SK-N-SH (cell line): ENCODE measurements at regions of chr7 and their contacts with region 1.

Region 1: GRCh38 chr7:5083311-5083711 is 37.7 kb downstream of the RBAK start:
- DNase-seq: peak; percentile 63
- H3K4me3 ChIP-seq: peak overlapping the region; percentile 9 to 35; a peak in 2 of 4 replicates
- H3K27ac ChIP-seq: no peak overlapping the region
- H3K4me1 ChIP-seq: peaks cover 0 to 10% of the 10 kb centered on the region in 2 experiments; a peak in 1 of 4 replicates
- H3K27me3 ChIP-seq: peaks cover 36% of the 10 kb centered on the region
- CTCF ChIP-seq: no peak
- EP300 ChIP-seq: no peak
- RAD21 ChIP-seq: peak; percentile 2; the same call in 1 of the 2 replicates

Region 2: DNA sequence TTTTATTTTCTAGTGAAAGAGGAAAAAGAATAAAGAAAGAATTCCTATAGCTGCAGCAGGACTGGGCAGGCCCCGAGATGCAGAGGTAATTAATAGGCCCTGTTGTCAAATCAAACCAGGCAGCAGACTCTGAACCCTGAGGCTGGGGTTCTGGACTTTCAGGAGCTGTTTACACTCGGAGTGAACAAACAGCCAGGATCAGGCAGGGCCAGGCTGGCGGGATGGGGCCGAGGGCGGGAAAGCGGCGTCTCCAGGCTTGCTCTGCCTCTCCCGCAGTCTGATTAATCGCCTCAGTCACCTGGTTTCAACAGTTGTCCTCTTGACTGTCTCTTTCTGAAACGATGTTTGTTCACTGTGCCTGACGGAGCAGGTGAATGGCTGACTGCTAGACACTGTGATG is 1076.6 kb before region 1 on chr7:
- CTCF ChIA-PET with region 1: no interaction called
- POLR2A ChIA-PET with region 1: no interaction called
- DNase-seq: peak; percentile 89
- H3K4me3 ChIP-seq: no peak overlapping the region
- H3K27ac ChIP-seq: peak overlapping the region in 1 of 2 experiments; percentile 24; a peak in 2 of 4 replicates
- H3K4me1 ChIP-seq: peaks cover 0 to 11% of the 10 kb centered on the region in 2 experiments; a peak in 2 of 4 replicates
- H3K27me3 ChIP-seq: no peaks in the 10 kb centered on the region
- CTCF ChIP-seq: no peak
- EP300 ChIP-seq: peak in 1 of 2 experiments; percentile 86; a peak in 2 of 4 replicates
- RAD21 ChIP-seq: peak; percentile 36

Region 3: DNA sequence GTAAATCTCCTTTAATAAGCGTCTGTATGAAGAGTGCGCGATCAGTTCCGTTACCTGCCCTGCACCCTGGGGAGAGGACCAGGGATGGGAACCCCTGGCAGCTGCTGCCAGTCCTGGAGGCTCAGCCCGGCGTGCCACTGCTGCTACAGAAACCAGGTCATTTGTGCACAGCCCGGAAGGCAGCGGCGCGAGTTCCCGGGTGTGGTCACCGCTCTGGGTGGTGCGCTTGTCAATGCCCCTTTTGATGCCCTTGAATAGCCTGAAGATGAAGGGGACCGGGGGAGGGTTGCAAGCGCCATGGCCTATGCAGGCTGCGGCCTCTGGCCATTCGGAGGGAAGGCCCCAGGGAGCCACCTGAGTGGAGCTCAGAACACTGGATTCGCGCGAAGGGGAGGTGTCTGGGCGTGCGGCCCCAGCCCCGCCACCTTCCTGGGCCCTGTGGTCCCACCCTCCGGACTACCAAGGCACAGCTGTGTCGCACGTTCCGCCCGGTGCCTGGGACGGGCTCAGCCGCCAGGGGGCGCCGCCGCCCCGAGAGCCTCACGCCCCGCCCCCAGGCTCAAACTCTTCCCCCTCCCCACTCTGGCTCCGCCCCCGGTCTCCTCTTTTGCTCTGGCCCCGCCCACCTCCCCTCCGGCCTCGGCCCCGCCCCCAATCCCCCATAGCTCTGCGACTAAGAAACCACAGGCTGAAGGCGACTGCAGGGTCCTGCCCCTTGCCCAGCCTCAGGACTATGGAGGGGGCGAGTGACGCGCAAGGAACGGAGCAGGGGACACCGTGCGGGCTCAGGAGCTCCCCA is 291.4 kb before region 1 on chr7:
- CTCF ChIA-PET with region 1: interaction called, 98 read pairs
- POLR2A ChIA-PET with region 1: no interaction called
- DNase-seq: peak; percentile 96
- H3K4me3 ChIP-seq: no peak overlapping the region; a peak in 1 of 4 replicates
- H3K27ac ChIP-seq: no peak overlapping the region
- H3K4me1 ChIP-seq: no peaks in the 10 kb centered on the region
- H3K27me3 ChIP-seq: no peaks in the 10 kb centered on the region
- CTCF ChIP-seq: peak; percentile 61
- EP300 ChIP-seq: no peak
- RAD21 ChIP-seq: no peak

Region 4: DNA sequence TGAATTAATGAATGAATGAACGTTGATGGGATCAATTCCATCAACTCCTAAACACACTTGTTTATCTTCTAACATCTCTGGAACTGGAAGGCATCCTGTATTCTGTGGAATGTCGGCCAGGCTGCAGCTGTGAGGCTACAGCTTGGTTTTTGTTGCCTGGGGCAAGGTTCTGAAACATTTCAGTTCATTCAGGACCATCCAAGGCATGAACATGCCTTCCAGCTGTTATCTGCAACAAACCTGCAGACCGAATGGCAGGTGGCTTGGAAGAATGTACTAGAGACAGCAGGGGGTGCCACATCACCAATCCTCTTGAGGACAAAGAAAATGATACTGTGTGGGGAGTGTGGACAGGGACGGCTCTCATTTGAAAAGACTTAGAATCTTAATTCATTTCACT is 233.9 kb before region 1 on chr7:
- CTCF ChIA-PET with region 1: interaction called, 41 read pairs
- POLR2A ChIA-PET with region 1: no interaction called
- DNase-seq: peak; percentile 81
- H3K4me3 ChIP-seq: no peak overlapping the region
- H3K27ac ChIP-seq: peak overlapping the region in 1 of 2 experiments; percentile 5; a peak in 1 of 4 replicates
- H3K4me1 ChIP-seq: peaks cover 0 to 19% of the 10 kb centered on the region in 2 experiments; a peak in 2 of 4 replicates
- H3K27me3 ChIP-seq: no peaks in the 10 kb centered on the region
- CTCF ChIP-seq: peak; percentile 51
- EP300 ChIP-seq: peak in 1 of 2 experiments; percentile 45; a peak in 1 of 4 replicates
- RAD21 ChIP-seq: peak; percentile 95

Region 5: DNA sequence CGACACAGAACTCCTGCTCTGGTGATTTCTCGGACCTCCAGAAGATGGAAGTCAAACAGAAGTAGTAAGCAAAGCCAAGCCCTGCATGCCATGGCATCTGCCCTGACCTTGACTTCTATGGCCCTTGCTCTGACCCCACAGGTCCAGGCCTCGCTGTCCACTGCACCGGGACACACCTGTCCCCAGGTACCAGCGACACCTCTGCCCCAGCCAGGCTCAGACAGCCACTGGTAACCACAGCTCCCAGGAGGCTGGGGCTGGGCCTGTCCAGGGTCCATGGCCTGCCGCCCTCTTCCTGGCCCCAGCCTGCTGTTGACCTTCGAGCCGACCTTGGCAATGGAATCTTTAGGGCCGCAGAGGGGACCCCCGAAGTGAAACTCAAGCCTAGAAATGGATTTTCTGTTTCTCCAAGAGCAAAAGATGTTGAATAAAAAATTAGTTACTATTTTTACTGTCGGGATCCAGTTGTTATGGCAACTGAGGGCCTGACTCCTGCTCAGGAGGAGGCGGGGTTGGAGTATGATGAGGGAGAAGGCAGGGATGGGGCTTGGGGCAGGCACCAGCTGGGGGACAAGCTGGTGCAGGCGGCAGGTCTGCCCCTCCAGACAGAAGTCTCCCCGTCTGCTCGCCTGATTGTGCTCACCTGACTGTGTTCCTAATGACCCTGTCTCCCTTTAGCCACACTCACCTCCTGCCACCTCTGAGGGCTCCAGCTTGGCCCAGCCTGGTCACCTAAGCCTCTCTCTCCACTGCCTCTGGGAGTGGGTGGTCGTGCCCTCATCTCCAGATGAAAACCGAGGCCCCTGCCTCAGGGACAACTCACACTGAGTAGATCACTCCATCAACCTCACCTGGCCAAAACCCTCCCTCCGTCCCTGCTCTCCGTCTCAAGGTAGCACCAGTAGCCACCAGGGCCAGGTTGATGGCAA is 120.2 kb before region 1 on chr7:
- CTCF ChIA-PET with region 1: interaction called, 10 read pairs
- POLR2A ChIA-PET with region 1: no interaction called
- DNase-seq: no peak
- H3K4me3 ChIP-seq: no peak overlapping the region
- H3K27ac ChIP-seq: no peak overlapping the region
- H3K4me1 ChIP-seq: no peaks in the 10 kb centered on the region; a peak in 1 of 4 replicates
- H3K27me3 ChIP-seq: peaks cover 31% of the 10 kb centered on the region
- CTCF ChIP-seq: no peak
- EP300 ChIP-seq: no peak
- RAD21 ChIP-seq: no peak

Region 6: DNA sequence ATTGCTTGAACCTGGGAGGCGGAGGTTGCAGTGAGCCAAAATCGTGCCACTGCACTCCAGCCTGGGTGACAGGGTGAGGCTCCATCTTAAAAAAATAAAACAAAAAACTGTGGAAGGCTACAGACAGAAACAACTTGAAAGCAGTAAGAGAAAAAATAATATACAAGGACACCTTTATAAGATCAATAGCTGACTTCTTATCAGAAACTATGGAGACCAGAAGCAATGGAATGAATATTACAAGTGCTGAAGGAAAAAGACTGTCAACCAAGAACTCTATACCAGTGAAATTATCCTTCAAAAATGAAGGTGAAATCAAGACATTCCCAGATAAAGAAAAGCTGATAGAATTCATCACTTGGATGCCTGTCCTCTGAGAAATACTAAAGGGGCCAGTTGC is 11.3 kb after region 1 on chr7:
- CTCF ChIA-PET with region 1: interaction called, 25 read pairs
- POLR2A ChIA-PET with region 1: interaction called, 3 read pairs
- DNase-seq: no peak
- H3K4me3 ChIP-seq: no peak overlapping the region
- H3K27ac ChIP-seq: no peak overlapping the region
- H3K4me1 ChIP-seq: no peaks in the 10 kb centered on the region
- H3K27me3 ChIP-seq: no peaks in the 10 kb centered on the region
- CTCF ChIP-seq: no peak
- EP300 ChIP-seq: no peak
- RAD21 ChIP-seq: no peak

Region 7: DNA sequence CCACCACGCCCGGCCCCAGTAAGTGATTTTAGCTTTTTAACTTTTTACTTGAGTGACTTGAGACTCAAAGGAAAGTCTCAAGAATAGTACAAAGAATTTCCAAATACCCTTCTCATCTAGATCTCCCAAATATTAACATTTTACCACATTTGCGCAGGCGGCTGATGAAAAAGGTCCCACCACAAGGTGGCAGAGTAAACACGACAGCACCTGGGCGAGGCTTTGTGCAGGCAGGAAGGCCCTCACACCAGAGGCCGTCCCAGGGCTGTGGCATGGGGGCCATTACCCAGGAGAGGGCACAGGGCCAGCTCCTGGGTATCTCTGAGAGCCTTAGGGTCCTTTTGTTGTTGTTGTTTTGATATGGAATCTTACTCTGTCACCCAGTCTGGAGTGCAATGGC is 56.7 kb after region 1 on chr7:
- CTCF ChIA-PET with region 1: interaction called, 14 read pairs
- POLR2A ChIA-PET with region 1: no interaction called
- DNase-seq: peak; percentile 81
- H3K4me3 ChIP-seq: no peak overlapping the region
- H3K27ac ChIP-seq: no peak overlapping the region
- H3K4me1 ChIP-seq: no peaks in the 10 kb centered on the region
- H3K27me3 ChIP-seq: peaks cover 7% of the 10 kb centered on the region; the same call in 1 of the 2 replicates
- CTCF ChIP-seq: peak; percentile 62
- EP300 ChIP-seq: no peak
- RAD21 ChIP-seq: peak; percentile 70